ENCODE measurements at regions of chr1 and their contacts with region 1.

Region 1: GRCh38 chr1:26900001-26900814 is at the start of gene GPATCH3:
- DNase-seq: peak; percentile 88 to 93 (median 89)
- H3K4me3 ChIP-seq: peak within 1 kb of the TSS; percentile 86 to 97 (median 91)
- H3K27ac ChIP-seq: peak within 1 kb of the TSS; percentile 97 to 98
- H3K4me1 ChIP-seq: peaks cover 7 to 23% (median 19%) of the 10 kb centered on the region in 4 experiments
- H3K27me3 ChIP-seq: no peaks in the 10 kb centered on the region

Region 2: DNA sequence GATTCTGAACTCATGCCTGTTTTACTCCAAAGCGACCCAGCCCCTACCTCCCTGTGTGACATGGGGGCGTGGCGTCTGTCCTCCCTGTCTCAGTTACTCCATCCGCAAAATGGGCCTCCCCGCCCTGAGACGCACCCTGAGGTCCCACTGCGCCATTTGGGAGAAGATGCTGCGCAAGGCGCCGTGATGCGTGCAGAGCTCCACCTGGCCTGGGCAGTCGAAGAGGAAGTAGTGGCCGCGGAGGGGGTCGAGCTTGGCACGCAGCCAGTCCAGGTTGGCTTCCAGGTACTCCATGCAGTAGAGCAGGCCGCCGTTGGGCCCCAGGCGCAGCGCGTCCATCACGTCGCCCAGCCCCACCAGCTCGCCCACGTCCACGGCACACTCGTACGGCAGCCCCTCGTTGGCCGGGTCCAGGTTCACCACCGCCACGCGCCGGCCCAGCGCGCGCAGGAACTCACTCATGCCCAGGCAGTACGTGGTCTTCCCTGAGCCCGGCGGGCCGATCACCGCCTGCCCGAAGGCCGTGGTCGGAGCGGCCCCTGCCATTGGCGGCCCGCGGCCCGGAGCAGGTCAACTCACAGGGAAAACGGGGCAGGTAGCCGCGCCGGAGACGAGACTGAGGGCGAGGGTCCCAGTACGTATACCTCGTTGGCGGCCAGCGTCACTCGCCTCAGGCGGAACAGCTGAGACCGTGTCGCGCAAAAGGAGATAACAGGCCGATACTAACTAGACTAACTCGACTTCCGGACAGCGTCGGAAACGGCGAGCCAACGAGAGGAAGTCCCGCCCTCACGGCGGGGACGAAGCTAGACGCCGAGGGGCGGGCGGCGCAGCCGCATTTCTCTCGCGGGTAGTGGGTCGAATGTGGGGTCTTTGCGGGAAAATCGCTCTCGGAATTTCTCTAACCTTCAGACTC is 10.4 kb before region 1 on chr1 and contains the start of gene GPN2:
- CTCF ChIA-PET with region 1: interaction called, 26 read pairs
- POLR2A ChIA-PET with region 1: interaction called, 12 read pairs
- DNase-seq: peak; percentile 79 to 90 (median 85)
- H3K4me3 ChIP-seq: peak within 1 kb of the TSS; percentile 65 to 96 (median 91)
- H3K27ac ChIP-seq: peak within 1 kb of the TSS; percentile 72 to 89
- H3K4me1 ChIP-seq: peaks cover 3 to 21% (median 18%) of the 10 kb centered on the region in 4 experiments
- H3K27me3 ChIP-seq: no peaks in the 10 kb centered on the region

Region 3: DNA sequence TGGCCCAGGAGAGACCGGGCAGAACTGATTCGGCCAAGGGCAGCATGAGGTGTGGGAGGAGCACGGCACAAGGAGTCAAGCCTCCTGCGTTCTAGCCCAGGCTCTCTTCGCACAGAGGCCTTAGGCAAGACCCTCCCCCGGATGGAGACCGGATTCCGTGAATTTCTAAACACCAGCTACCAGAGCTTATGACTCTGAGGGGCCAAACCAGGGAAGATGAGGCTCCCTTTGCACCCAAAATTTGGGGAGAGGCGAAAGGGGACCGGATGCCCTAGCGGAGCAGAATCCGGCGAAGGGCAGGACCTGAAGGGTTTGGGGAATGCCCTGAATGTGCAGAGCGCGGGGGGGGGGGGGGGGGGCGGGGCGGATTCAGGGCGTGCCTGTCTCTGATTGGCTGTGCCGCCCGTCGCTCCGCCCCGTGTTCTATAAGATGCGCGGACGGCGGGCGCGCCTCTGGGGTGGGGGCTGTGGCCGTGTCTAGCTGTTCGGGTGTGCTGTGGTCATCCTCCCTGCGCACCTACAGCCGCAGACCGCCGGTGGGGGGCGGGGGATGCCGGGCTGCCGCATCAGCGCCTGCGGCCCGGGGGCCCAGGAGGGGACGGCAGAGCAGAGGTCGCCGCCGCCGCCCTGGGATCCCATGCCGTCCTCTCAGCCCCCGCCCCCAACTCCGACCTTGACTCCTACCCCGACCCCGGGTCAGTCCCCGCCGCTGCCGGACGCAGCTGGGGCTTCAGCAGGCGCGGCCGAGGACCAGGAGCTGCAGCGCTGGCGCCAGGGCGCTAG is 93.2 kb after region 1 on chr1 and contains the start of gene TRNP1:
- CTCF ChIA-PET with region 1: no interaction called
- POLR2A ChIA-PET with region 1: no interaction called
- DNase-seq: peak in 2 of 3 donors; percentile 47 to 61
- H3K4me3 ChIP-seq: peak within 1 kb of the TSS; percentile 9 to 68 (median 38)
- H3K27ac ChIP-seq: no peak within 1 kb of the TSS
- H3K4me1 ChIP-seq: peaks cover 2 to 34% (median 34%) of the 10 kb centered on the region in 4 experiments
- H3K27me3 ChIP-seq: peaks cover 3 to 59% (median 26%) of the 10 kb centered on the region in 5 experiments

Measured in common myeloid progenitor, CD34-positive (primary cell).